HEK293T (cell line): ENCODE measurements at regions of chr5 and their contacts with region 1.

Region 1: DNA sequence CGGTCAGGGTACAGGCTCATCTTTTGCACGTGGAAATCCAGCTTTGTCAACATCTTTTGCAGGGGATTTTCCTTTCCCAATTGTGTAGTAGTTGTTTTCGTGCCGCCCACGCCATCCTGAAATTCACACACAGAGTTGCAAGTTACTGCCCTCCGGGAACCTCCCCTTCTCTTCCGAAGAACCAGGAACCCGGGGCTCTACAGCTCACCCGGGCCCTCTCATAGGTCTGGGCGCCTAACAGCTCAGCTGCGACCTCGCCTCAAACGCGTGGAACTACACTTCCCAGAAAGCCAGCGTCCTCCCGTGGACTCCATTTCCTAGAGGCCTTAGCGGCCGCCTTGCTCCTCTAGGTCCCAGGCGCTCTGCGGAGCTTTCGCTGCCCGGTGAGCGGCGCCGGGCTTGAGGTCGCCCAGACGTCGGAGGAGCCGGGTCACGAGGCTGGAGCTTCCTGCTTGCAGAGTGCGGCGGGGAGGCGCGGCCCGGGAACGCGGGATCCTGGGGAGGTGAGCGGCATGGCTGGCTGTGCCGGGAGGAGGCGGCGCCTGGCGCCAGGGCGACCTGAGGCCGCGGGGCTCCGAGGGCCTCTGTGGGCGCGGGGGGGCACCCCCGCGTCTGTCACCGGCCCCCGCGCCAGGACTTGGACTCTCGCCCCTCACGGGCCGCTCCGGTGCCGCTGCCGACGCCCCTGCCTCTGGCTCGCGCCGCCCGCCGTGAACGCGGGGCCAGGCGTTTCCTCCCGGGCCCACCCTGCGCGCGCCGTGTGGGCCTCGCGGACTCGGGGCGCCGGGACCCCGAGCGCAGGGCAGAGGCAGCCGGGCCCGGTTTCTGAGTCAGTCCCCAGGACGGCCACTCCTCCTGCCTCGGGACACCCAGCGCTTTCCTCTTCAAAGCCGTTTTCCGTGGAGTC is at the start of gene ZNF354B:
- DNase-seq: peak; percentile 94

Region 2: GRCh38 chr5:178732281-178732680 is 127.6 kb before region 1 on chr5:
- CTCF ChIA-PET with region 1: interaction called, 10 read pairs
- POLR2A ChIA-PET with region 1: interaction called, 9 read pairs
- DNase-seq: no peak